Mammary epithelial cell (primary cell): ENCODE measurements at regions of chr10 and their contacts with region 1.

Region 1: GRCh38 chr10:89283936-89284475 is 17.8 kb upstream of the IFIT2 start:
- DNase-seq: peak; percentile 15
- H3K4me3 ChIP-seq: no peak overlapping the region
- H3K27ac ChIP-seq: peak overlapping the region; percentile 8
- H3K4me1 ChIP-seq: peaks cover 34% of the 10 kb centered on the region
- H3K27me3 ChIP-seq: no peaks in the 10 kb centered on the region
- CTCF ChIP-seq: no peak

Region 2: GRCh38 chr10:89263531-89263930 is 20.5 kb before region 1 on chr10:
- CTCF ChIA-PET with region 1: no interaction called
- dilution Hi-C with region 1: no loop called
- in situ Hi-C with region 1: no loop called
- intact Hi-C with region 1: no loop called
- DNase-seq: no peak
- H3K4me3 ChIP-seq: no peak overlapping the region
- H3K27ac ChIP-seq: no peak overlapping the region
- H3K4me1 ChIP-seq: peaks cover 27% of the 10 kb centered on the region
- H3K27me3 ChIP-seq: no peaks in the 10 kb centered on the region
- CTCF ChIP-seq: no peak

Region 3: DNA sequence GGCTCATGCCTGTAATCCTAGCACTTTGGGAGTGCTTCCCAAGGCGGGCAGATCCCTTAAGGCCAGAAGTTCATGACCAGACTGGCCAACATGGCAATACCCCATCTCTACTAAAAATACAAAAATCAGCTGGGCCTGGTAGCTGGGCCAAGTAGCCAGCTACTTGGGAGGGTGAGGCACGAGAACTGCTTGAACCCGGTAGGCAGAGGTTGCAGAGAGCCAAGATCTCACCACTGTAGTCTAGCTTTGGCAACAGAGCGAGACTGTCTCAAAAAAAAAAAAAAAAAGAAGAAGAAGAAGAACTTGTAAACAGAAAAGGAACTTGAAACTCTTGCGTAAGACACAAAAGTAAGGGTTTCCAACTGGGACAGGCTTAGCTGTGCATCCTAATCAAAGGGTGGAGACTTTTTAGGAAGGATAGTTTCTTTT is 12.2 kb after region 1 on chr10:
- CTCF ChIA-PET with region 1: interaction called, 12 read pairs
- dilution Hi-C with region 1: no loop called
- in situ Hi-C with region 1: no loop called
- intact Hi-C with region 1: no loop called
- DNase-seq: no peak
- H3K4me3 ChIP-seq: no peak overlapping the region
- H3K27ac ChIP-seq: no peak overlapping the region
- H3K4me1 ChIP-seq: peaks cover 2% of the 10 kb centered on the region
- H3K27me3 ChIP-seq: no peaks in the 10 kb centered on the region
- CTCF ChIP-seq: no peak

Region 4: GRCh38 chr10:89355394-89355931 is 71.5 kb after region 1 on chr10:
- CTCF ChIA-PET with region 1: no interaction called
- dilution Hi-C with region 1: no loop called
- in situ Hi-C with region 1: no loop called
- intact Hi-C with region 1: loop called (anchors 5 kb)
- DNase-seq: peak; percentile 46
- H3K4me3 ChIP-seq: no peak overlapping the region
- H3K27ac ChIP-seq: no peak overlapping the region
- H3K4me1 ChIP-seq: peaks cover 6% of the 10 kb centered on the region
- H3K27me3 ChIP-seq: no peaks in the 10 kb centered on the region
- CTCF ChIP-seq: no peak

Region 5: DNA sequence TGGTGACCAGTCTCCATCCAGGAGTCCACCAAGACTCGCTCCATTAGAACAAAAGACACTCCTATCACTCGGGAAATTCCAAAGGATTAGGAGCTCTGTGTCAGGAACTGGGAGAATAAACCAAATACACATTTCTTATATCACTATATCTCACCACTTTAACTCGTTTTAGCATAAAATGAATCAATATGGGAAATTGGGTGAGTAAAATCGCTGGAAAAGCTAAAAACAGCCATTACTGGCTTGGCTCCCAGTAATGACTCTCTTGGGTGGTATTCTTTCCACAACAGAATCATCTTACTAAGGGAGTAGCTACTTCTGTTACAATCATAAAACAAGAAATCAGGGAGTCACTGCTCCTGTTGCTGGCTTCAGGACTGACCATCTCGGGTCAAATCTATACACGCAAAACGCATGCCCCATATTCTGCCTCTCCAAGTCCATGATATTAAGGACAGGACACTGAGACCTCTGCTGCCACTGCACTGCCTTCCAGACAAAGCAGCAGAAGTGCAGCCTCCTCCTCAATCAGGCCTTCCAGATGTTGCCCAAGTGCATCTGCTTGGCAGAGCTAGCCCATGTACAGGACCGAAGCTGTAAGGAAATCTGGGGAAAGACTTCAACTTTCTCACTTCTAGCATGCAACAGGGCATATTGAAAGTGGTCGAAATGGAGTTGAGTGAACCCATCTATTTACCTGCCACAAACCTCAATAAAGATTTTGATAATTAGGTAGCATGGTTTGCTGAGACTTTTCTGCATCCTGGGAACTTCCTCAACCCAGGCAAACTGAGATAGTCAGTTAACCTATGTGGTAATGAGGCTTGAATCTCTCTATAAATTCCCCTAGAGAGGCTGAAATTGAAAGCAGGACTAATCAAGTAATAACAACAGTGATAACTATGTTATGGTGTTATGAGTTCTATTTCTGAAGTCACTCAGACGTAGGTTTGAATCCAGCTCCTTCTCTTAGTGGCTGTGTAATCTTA is 375.4 kb after region 1 on chr10:
- CTCF ChIA-PET with region 1: no interaction called
- dilution Hi-C with region 1: no loop called
- in situ Hi-C with region 1: no loop called
- intact Hi-C with region 1: no loop called
- DNase-seq: no peak
- H3K4me3 ChIP-seq: no peak overlapping the region
- H3K27ac ChIP-seq: no peak overlapping the region
- H3K4me1 ChIP-seq: no peaks in the 10 kb centered on the region
- H3K27me3 ChIP-seq: no peaks in the 10 kb centered on the region
- CTCF ChIP-seq: no peak